CD8-positive, alpha-beta T cell (primary cell): ENCODE measurements at regions of chr10 and their contacts with region 1.

Region 1: GRCh38 chr10:27155066-27155754 is at the start of gene MASTL:
- DNase-seq: peak; percentile 90 to 98 (median 93)
- ATAC-seq: peak; percentile 82
- H3K4me3 ChIP-seq: peak within 1 kb of the TSS; percentile 84 to 98
- H3K4me3 Mint-ChIP-seq: peak within 1 kb of the TSS; percentile 99
- H3K27ac ChIP-seq: peak within 1 kb of the TSS; percentile 100
- H3K27ac Mint-ChIP-seq: peak within 1 kb of the TSS; percentile 100
- H3K4me1 ChIP-seq: peaks cover 27% of the 10 kb centered on the region
- H3K4me1 Mint-ChIP-seq: peaks cover 49% of the 10 kb centered on the region
- H3K27me3 ChIP-seq: no peaks in the 10 kb centered on the region
- H3K27me3 Mint-ChIP-seq: no peaks in the 10 kb centered on the region
- CTCF ChIP-seq: no peak
- total RNA-seq, gene MASTL: 33.4 to 33.6 TPM

Region 2: DNA sequence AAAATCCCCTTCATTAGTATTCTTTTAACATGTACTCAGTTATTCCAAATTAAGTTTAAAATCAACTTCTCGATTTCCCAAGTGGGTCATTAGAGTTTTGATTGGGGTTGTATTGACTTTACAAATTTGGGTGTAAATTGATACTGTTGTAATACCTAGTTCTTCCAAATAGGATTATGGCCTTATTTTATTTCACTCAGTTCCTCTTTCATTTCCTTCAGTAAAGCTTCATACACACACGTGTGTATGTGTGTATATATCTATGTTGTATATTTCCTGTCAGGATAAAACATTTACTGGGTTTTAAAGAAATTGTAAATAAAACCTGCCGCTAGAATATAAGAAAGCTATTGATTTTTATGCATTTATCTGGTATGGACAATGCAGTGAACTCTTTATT is 16.9 kb before region 1 on chr10:
- CTCF ChIA-PET with region 1: interaction called, 3 read pairs
- POLR2A ChIA-PET with region 1: interaction called, 3 read pairs
- intact Hi-C with region 1: loop called in 1 of 2 experiments (anchors 2 kb)
- DNase-seq: no peak
- ATAC-seq: no peak
- H3K4me3 ChIP-seq: no peak overlapping the region
- H3K4me3 Mint-ChIP-seq: no peak overlapping the region
- H3K27ac ChIP-seq: no peak overlapping the region
- H3K27ac Mint-ChIP-seq: no peak overlapping the region
- H3K4me1 ChIP-seq: no peaks in the 10 kb centered on the region
- H3K4me1 Mint-ChIP-seq: no peaks in the 10 kb centered on the region
- H3K27me3 ChIP-seq: no peaks in the 10 kb centered on the region
- H3K27me3 Mint-ChIP-seq: no peaks in the 10 kb centered on the region
- CTCF ChIP-seq: no peak